ENCODE measurements at regions of chr9 and their contacts with region 1.

Region 1: GRCh38 chr9:127347831-127348779 is 48.9 kb upstream of the SLC2A8 start:
- DNase-seq: peak; percentile 16 to 49
- H3K4me3 ChIP-seq: no peak overlapping the region
- H3K27ac ChIP-seq: no peak overlapping the region
- H3K4me1 ChIP-seq: no peaks in the 10 kb centered on the region
- H3K27me3 ChIP-seq: no peaks in the 10 kb centered on the region
- CTCF ChIP-seq: peak; percentile 62

Region 2: GRCh38 chr9:127214421-127215267 is 133.5 kb before region 1 on chr9:
- CTCF ChIA-PET with region 1: interaction called, 6 read pairs
- POLR2A ChIA-PET with region 1: no interaction called
- intact Hi-C with region 1: loop called (anchors 1 kb)
- DNase-seq: peak; percentile 49 to 75
- H3K4me3 ChIP-seq: no peak overlapping the region
- H3K27ac ChIP-seq: no peak overlapping the region
- H3K4me1 ChIP-seq: 0 out of 2 replicates have a peak, but pooled peaks cover 4% of the 10 kb centered on the region
- H3K27me3 ChIP-seq: no peaks in the 10 kb centered on the region
- CTCF ChIP-seq: peak; percentile 89

Region 3: GRCh38 chr9:127479507-127480081 is 131.5 kb after region 1 on chr9:
- CTCF ChIA-PET with region 1: no interaction called
- POLR2A ChIA-PET with region 1: no interaction called
- intact Hi-C with region 1: no loop called
- DNase-seq: no peak
- H3K4me3 ChIP-seq: no peak overlapping the region
- H3K27ac ChIP-seq: no peak overlapping the region
- H3K4me1 ChIP-seq: no peaks in the 10 kb centered on the region
- H3K27me3 ChIP-seq: no peaks in the 10 kb centered on the region
- CTCF ChIP-seq: no peak

Measured in PC-9 (cell line).